ENCODE measurements at regions of chr1 and their contacts with region 1.

Region 1: DNA sequence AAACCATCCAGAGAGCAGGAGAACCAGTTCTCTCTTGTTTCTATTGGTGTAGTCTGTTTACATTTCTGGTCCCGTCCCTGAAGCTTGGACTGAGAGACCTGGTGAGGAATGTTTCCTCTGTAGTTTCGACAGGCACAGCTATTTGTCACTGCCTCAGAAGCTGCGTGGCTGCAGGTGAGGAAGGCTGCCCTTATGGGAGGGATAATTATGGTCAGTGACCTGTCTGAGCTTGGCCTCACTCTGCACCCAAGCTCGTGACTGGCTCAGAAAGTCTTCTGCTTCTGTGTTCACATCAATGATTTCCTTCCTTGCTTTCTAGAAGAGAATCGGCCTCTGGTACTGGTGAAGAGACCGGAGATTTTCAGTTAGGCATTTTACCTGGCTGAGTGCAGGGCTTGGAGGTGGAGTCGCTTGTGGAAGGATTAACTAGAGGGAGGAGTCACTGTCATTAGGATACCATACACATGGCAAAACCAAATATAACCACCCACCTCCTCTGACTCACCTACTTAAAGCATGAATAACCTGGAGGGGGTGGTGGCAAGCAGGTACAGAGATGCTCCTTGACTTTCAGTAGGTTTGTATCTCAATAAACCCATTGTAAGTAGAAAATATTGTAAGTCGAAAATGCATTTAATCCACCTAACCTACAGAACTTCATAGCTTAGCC is 19.9 kb upstream of the WDR26 start:
- DNase-seq: peak; percentile 81 to 98
- H3K4me3 ChIP-seq: peak overlapping the region; percentile 39; the same call in 1 of the 2 replicates
- H3K27ac ChIP-seq: peak overlapping the region; percentile 88
- H3K4me1 ChIP-seq: peaks cover 45% of the 10 kb centered on the region
- H3K27me3 ChIP-seq: no peaks in the 10 kb centered on the region
- CTCF ChIP-seq: no peak

Region 2: GRCh38 chr1:223837206-223837605 is 617.3 kb before region 1 on chr1:
- CTCF ChIA-PET with region 1: no interaction called
- POLR2A ChIA-PET with region 1: interaction called, 20 read pairs
- intact Hi-C with region 1: no loop called
- DNase-seq: no peak
- H3K4me3 ChIP-seq: no peak overlapping the region; the same call in 1 of the 2 replicates
- H3K27ac ChIP-seq: peak overlapping the region; percentile 55
- H3K4me1 ChIP-seq: peaks cover 79% of the 10 kb centered on the region
- H3K27me3 ChIP-seq: no peaks in the 10 kb centered on the region
- CTCF ChIP-seq: no peak

Region 3: GRCh38 chr1:224113918-224114786 is 340.4 kb before region 1 on chr1 and contains the start of gene FBXO28:
- CTCF ChIA-PET with region 1: no interaction called
- POLR2A ChIA-PET with region 1: no interaction called
- intact Hi-C with region 1: loop called (anchors 1 kb)
- DNase-seq: peak; percentile 86 to 93
- H3K4me3 ChIP-seq: peak within 1 kb of the TSS; percentile 81
- H3K27ac ChIP-seq: peak within 1 kb of the TSS; percentile 45
- H3K4me1 ChIP-seq: peaks cover 24% of the 10 kb centered on the region
- H3K27me3 ChIP-seq: no peaks in the 10 kb centered on the region
- CTCF ChIP-seq: no peak
- total RNA-seq, gene FBXO28: 43.4 and 48.1 TPM in 2 replicates

Region 4: DNA sequence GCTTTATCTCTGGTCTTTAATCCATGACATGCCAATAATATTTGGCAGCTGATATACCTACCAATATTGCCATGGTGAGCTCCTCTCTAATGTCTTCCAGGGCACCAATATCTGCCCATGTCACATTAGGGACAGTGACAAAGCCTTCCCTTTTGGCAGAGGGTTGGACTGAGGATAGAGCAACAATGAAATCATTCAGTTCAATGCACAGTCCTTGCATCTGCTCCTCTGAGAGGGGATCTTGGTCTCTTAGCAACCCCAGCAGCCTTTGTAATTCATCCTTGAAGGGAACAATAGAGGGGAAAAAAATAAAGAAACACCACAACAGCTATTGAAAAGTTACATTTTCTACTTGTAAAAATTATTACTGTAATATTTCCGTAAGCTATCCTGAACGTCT is 166.8 kb before region 1 on chr1:
- CTCF ChIA-PET with region 1: interaction called, 11 read pairs
- POLR2A ChIA-PET with region 1: no interaction called
- intact Hi-C with region 1: no loop called
- DNase-seq: no peak
- H3K4me3 ChIP-seq: no peak overlapping the region
- H3K27ac ChIP-seq: no peak overlapping the region
- H3K4me1 ChIP-seq: no peaks in the 10 kb centered on the region
- H3K27me3 ChIP-seq: no peaks in the 10 kb centered on the region
- CTCF ChIP-seq: no peak

Region 5: DNA sequence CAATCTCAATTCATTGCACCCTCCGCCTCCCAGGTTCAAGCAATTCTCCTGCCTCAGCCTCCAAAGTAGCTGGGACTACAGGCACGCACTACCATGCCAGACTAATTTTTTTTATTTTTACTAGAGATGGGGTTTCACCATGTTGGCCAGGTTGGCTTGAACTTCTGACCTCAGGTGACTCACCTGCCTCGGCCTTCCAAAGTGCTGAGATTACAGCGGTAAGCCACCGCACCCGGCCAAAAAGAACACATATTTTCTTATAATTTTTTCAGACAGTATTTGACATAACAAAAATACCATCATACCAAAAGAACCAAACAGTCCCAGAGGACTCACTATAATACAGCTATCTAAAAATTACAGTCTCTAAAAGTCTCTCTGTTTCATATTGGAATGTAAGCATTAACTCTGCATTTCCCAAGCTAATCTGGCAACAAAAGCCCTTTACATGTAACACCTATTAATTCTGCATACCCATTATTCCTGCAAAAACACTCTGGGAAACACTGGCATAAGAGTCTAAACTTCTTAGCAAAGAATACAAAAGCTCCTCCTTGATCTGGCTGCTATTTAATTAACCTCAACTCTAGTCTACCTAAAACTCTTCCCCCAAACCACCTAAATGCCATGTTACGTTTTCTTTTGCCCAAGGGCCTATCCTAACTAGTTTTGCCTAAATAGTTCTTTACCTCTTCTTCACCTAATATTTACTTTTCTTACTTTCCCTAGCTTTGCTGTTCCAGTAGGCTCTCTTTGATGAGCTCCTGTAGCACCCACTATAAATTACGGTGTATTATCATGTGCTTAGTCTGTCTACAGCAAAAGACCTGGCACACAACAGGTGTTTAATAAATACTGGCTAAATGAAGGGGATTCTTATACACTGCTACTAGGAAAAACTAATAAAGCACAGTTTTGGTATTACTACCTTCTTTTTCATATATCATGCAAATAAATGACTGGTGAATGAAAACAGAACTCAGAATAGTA is 46.7 kb before region 1 on chr1:
- CTCF ChIA-PET with region 1: interaction called, 6 read pairs
- POLR2A ChIA-PET with region 1: interaction called, 6 read pairs
- intact Hi-C with region 1: loop called (anchors 2 kb)
- DNase-seq: peak; percentile 82 to 83
- H3K4me3 ChIP-seq: peak overlapping the region; percentile 2; the same call in 1 of the 2 replicates
- H3K27ac ChIP-seq: peak overlapping the region; percentile 68
- H3K4me1 ChIP-seq: peaks cover 35% of the 10 kb centered on the region
- H3K27me3 ChIP-seq: no peaks in the 10 kb centered on the region
- CTCF ChIP-seq: no peak

Region 6: GRCh38 chr1:224497714-224498573 is 43.4 kb after region 1 on chr1:
- CTCF ChIA-PET with region 1: interaction called, 17 read pairs
- POLR2A ChIA-PET with region 1: interaction called, 3 read pairs
- intact Hi-C with region 1: loop called (anchors 1 kb)
- DNase-seq: peak; percentile 73 to 89
- H3K4me3 ChIP-seq: peak overlapping the region; percentile 39; the same call in 1 of the 2 replicates
- H3K27ac ChIP-seq: peak overlapping the region; percentile 99
- H3K4me1 ChIP-seq: peaks cover 57% of the 10 kb centered on the region
- H3K27me3 ChIP-seq: no peaks in the 10 kb centered on the region
- CTCF ChIP-seq: no peak

Region 7: GRCh38 chr1:224922404-224923164 is 468.1 kb after region 1 on chr1:
- CTCF ChIA-PET with region 1: interaction called, 12 read pairs
- POLR2A ChIA-PET with region 1: no interaction called
- intact Hi-C with region 1: no loop called
- DNase-seq: peak; percentile 16 to 51
- H3K4me3 ChIP-seq: no peak overlapping the region
- H3K27ac ChIP-seq: no peak overlapping the region
- H3K4me1 ChIP-seq: no peaks in the 10 kb centered on the region
- H3K27me3 ChIP-seq: no peaks in the 10 kb centered on the region
- CTCF ChIP-seq: peak; percentile 83

Region 8: GRCh38 chr1:225467193-225468020 is 1012.9 kb after region 1 on chr1:
- CTCF ChIA-PET with region 1: no interaction called
- POLR2A ChIA-PET with region 1: no interaction called
- intact Hi-C with region 1: no loop called
- DNase-seq: no peak
- H3K4me3 ChIP-seq: no peak overlapping the region
- H3K27ac ChIP-seq: no peak overlapping the region
- H3K4me1 ChIP-seq: peaks cover 42% of the 10 kb centered on the region
- H3K27me3 ChIP-seq: no peaks in the 10 kb centered on the region
- CTCF ChIP-seq: no peak

Measured in PC-9 (cell line).